GM10248 (cell line): ENCODE measurements at regions of chr2 and their contacts with region 1.

Region 1: GRCh38 chr2:62536873-62537547 is 31.0 kb upstream of the TMEM17 start:
- DNase-seq: no peak
- CTCF ChIP-seq: no peak

Region 2: GRCh38 chr2:62526531-62527381 is 10.3 kb before region 1 on chr2:
- CTCF ChIA-PET with region 1: interaction called, 11 read pairs
- POLR2A ChIA-PET with region 1: no interaction called
- DNase-seq: no peak
- CTCF ChIP-seq: no peak

Region 3: DNA sequence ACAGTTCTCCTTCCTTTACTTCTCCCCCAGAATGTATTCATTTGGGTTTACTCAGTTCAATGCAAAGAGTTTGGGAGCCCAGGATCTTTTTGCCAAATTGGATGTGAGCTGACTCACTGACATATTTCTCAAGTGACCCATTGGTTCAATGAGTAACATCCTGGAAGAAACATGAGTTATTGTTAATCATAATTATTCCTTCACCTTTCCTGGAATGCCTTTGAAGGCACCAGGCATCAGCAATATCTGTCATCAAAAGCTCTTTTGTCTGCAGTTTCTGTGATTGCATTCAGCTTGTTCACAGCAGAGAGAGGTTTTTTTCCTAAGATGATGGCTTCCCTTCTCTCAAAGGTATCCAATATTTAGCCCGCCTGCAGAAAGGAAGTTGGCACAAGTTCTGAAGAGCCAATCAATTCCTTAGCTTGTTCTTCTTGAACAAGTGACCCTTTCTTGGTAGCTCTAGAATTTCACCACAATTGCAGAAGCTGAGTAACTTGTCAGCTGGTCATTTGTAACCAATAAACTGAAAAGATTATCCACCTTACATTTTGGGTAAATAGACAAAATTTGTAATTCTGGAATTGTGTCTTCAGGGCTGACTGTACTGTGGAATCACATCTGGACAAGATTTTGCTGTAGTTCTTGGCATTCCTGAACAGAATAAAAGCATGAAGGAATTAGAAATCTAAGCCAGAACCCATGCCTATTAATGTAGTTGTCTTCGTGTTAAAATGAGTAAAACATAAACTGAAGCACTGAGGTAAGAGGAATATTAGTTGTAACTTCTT is 41.2 kb after region 1 on chr2:
- CTCF ChIA-PET with region 1: no interaction called
- POLR2A ChIA-PET with region 1: no interaction called
- DNase-seq: no peak
- CTCF ChIP-seq: no peak

Region 4: GRCh38 chr2:62589691-62590356 is 52.8 kb after region 1 on chr2:
- CTCF ChIA-PET with region 1: no interaction called
- POLR2A ChIA-PET with region 1: no interaction called
- DNase-seq: no peak
- CTCF ChIP-seq: no peak